ENCODE measurements at regions of chr9 and their contacts with region 1.

Region 1: GRCh38 chr9:107239474-107239873 is 43.6 kb upstream of the RAD23B start:
- DNase-seq: peak in 2 of 3 donors; percentile 8 to 12
- H3K4me3 ChIP-seq: no peak overlapping the region
- H3K4me3 Mint-ChIP-seq: no peak overlapping the region
- H3K27ac ChIP-seq: no peak overlapping the region
- H3K27ac Mint-ChIP-seq: no peak overlapping the region
- H3K4me1 ChIP-seq: no peaks in the 10 kb centered on the region
- H3K4me1 Mint-ChIP-seq: no peaks in the 10 kb centered on the region
- H3K27me3 ChIP-seq: no peaks in the 10 kb centered on the region
- H3K27me3 Mint-ChIP-seq: peaks cover 2 to 7% (median 3%) of the 10 kb centered on the region in 3 donors
- CTCF ChIP-seq: peak; percentile 18

Region 2: GRCh38 chr9:107340920-107341632 is 101.6 kb after region 1 on chr9:
- intact Hi-C with region 1: loop called in 1 of 2 experiments (anchors 5 kb)
- DNase-seq: peak; percentile 39 to 66 (median 51)
- H3K4me3 ChIP-seq: no peak overlapping the region
- H3K4me3 Mint-ChIP-seq: peak overlapping the region in 1 of 2 donors; percentile 32
- H3K27ac ChIP-seq: no peak overlapping the region
- H3K27ac Mint-ChIP-seq: no peak overlapping the region
- H3K4me1 ChIP-seq: no peaks in the 10 kb centered on the region
- H3K4me1 Mint-ChIP-seq: peaks cover 3% of the 10 kb centered on the region
- H3K27me3 ChIP-seq: no peaks in the 10 kb centered on the region
- H3K27me3 Mint-ChIP-seq: peaks cover 2 to 4% (median 4%) of the 10 kb centered on the region in 3 donors
- CTCF ChIP-seq: peak; percentile 91